A673 (cell line): ENCODE measurements at regions of chr14 and their contacts with region 1.

Region 1: DNA sequence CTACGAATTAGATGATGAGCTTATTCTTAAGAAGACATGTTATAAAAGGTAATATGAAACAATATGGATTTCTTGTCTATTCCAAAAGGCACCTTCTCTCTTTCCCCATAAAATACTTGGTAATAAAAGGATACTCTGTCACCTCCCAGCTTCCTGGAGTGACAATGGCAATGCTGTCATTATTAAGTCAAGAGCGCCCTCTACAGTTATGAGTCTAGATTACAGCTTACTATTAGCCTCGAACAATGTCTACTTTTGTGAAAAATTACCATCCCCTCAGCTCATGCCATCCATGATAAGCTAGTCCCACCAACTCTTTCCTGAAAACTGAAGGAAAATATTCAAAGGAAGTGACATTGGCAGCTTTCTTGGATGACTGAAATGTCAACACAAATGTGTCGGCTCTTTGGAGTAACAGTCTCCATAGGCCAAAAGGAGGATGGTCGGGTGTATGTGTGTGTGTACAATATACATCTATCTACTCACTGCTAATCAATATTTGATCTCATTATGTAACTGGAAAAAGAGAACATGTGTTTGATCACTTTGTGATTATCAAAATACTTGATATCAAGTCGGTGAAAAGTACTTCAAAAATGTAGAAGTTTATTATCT is 48.7 kb upstream of the CDKN3 start:
- DNase-seq: peak; percentile 77
- H3K4me3 ChIP-seq: no peak overlapping the region
- H3K27ac ChIP-seq: no peak overlapping the region
- H3K4me1 ChIP-seq: peaks cover 19% of the 10 kb centered on the region
- H3K27me3 ChIP-seq: no peaks in the 10 kb centered on the region
- CTCF ChIP-seq: peak; percentile 84

Region 2: DNA sequence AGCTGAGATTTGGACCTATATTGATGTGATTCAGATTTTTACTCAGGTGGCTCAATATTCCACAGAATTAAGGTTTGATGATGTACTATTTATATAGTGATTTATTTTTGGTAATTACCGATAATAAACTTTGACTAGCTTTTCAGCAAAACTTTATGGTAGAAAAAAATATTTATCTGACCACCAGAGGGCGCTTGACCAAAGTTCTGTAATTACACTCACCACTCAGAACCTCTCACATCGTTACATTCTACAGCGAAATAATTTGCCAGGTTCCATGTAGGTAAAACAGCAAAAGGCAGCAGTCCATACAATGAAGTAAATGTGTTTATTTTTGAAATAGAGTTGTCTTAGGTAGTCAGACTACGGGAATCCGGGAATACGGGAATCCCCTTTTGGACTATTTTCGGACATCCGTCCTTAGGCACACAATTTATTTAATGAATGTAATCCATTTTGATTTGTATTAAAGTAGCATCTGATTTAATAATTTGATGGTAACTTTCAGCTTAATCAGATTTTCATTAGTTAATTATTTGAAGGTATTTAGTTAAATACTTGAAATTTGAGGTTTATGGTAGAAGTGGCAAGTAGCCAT is 1052.0 kb before region 1 on chr14:
- CTCF ChIA-PET with region 1: interaction called, 12 read pairs
- POLR2A ChIA-PET with region 1: no interaction called
- intact Hi-C with region 1: loop called (anchors 2 kb)
- DNase-seq: peak; percentile 49
- H3K4me3 ChIP-seq: no peak overlapping the region
- H3K27ac ChIP-seq: no peak overlapping the region
- H3K4me1 ChIP-seq: no peaks in the 10 kb centered on the region
- H3K27me3 ChIP-seq: peaks cover 3% of the 10 kb centered on the region
- CTCF ChIP-seq: peak; percentile 74

Region 3: GRCh38 chr14:53412803-53413675 is 935.1 kb before region 1 on chr14:
- CTCF ChIA-PET with region 1: interaction called, 7 read pairs
- POLR2A ChIA-PET with region 1: no interaction called
- intact Hi-C with region 1: loop called (anchors 1 kb)
- DNase-seq: peak; percentile 25
- H3K4me3 ChIP-seq: no peak overlapping the region
- H3K27ac ChIP-seq: no peak overlapping the region
- H3K4me1 ChIP-seq: no peaks in the 10 kb centered on the region
- H3K27me3 ChIP-seq: no peaks in the 10 kb centered on the region
- CTCF ChIP-seq: peak; percentile 68

Region 4: DNA sequence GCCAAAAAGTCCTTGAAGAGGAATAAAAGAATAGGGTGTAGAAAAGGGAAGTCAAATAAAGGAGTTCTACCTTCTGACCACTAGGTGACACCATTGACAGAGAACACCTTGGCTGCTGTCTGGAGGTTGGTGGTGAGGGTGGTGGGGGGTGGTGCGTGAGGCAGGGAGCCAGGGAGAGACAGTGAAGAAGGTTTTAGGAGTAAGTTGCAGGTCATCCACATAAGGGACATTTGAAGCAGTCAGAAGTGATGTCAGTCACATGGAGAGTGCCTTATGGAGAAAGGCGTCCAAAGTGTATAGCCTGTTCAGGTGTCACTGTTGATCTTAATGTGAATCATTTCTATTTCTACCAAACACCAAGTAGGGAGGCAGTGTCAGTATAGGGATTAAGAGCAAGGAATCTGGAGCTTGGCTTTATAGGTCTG is 915.7 kb before region 1 on chr14:
- CTCF ChIA-PET with region 1: interaction called, 3 read pairs
- POLR2A ChIA-PET with region 1: no interaction called
- intact Hi-C with region 1: loop called (anchors 2 kb)
- DNase-seq: peak; percentile 46
- H3K4me3 ChIP-seq: no peak overlapping the region
- H3K27ac ChIP-seq: no peak overlapping the region
- H3K4me1 ChIP-seq: no peaks in the 10 kb centered on the region
- H3K27me3 ChIP-seq: peaks cover 11% of the 10 kb centered on the region
- CTCF ChIP-seq: peak; percentile 69

Region 5: GRCh38 chr14:53509276-53510244 is 838.5 kb before region 1 on chr14:
- CTCF ChIA-PET with region 1: no interaction called
- POLR2A ChIA-PET with region 1: interaction called, 15 read pairs
- intact Hi-C with region 1: no loop called
- DNase-seq: no peak
- H3K4me3 ChIP-seq: no peak overlapping the region
- H3K27ac ChIP-seq: no peak overlapping the region
- H3K4me1 ChIP-seq: no peaks in the 10 kb centered on the region
- H3K27me3 ChIP-seq: no peaks in the 10 kb centered on the region
- CTCF ChIP-seq: no peak

Region 6: GRCh38 chr14:54147282-54147681 is 200.8 kb before region 1 on chr14:
- CTCF ChIA-PET with region 1: no interaction called
- POLR2A ChIA-PET with region 1: no interaction called
- intact Hi-C with region 1: no loop called
- DNase-seq: peak; percentile 96
- H3K4me3 ChIP-seq: no peak overlapping the region
- H3K27ac ChIP-seq: no peak overlapping the region
- H3K4me1 ChIP-seq: peaks cover 5% of the 10 kb centered on the region
- H3K27me3 ChIP-seq: no peaks in the 10 kb centered on the region
- CTCF ChIP-seq: no peak

Region 7: GRCh38 chr14:54329082-54329695 is 18.9 kb before region 1 on chr14:
- CTCF ChIA-PET with region 1: interaction called, 12 read pairs
- POLR2A ChIA-PET with region 1: no interaction called
- intact Hi-C with region 1: no loop called
- DNase-seq: peak; percentile 71
- H3K4me3 ChIP-seq: no peak overlapping the region
- H3K27ac ChIP-seq: no peak overlapping the region
- H3K4me1 ChIP-seq: no peaks in the 10 kb centered on the region
- H3K27me3 ChIP-seq: peaks cover 33% of the 10 kb centered on the region
- CTCF ChIP-seq: peak; percentile 83